Activated naive CD4-positive, alpha-beta T cell treated with anti-CD3 and anti-CD28 coated beads for 36 hours (primary cell): ENCODE measurements at regions of chr3 and their contacts with region 1.

Region 1: DNA sequence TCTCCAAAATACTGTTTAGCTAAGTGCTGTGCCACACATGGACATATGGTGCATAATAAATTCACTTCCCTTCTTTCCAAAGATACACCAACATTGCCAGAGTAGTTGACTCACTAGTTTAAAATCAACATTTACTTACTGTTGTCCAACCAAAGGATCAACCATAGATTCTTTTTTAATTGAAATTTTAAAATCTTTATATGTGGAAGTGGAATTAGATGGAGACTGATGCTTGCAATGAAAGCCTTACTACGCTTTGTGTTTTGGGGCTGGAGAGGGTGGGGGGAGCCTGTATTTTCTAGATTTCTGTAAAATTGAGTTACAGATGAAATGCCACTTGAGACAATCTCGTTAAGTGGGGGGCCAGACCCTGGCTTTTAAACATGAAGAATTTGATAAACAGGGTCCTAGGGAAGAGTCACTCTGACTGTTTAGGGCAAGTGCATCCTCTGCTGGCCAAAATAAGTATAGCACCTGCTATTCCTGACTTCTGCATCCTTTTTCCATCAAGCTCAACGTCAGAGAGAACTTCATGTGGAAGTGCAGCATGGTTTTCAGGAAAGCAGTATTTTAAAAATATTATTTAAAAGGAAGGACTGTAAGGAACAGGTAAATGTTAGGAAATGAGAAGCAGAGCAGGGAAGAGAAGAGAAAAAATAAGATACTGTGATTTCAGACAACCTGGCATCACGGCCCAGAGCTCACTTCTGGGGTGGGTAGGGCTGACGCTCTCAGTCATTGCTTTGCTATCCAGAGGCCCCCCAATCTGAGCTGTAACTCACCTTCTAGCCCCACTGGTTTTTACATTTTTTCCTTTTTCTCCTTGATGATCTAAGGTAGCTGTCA is 76.7 kb downstream of the BOC start:
- DNase-seq: peak; percentile 67
- H3K4me3 Mint-ChIP-seq: no peak overlapping the region
- H3K27ac Mint-ChIP-seq: no peak overlapping the region
- H3K4me1 Mint-ChIP-seq: peaks cover 6% of the 10 kb centered on the region
- H3K27me3 Mint-ChIP-seq: no peaks in the 10 kb centered on the region

Region 2: GRCh38 chr3:112979240-112979832 is 308.7 kb before region 1 on chr3:
- CTCF ChIA-PET with region 1: no interaction called
- intact Hi-C with region 1: loop called (anchors 5 kb)
- DNase-seq: no peak
- H3K4me3 Mint-ChIP-seq: no peak overlapping the region
- H3K27ac Mint-ChIP-seq: no peak overlapping the region
- H3K4me1 Mint-ChIP-seq: peaks cover 64% of the 10 kb centered on the region
- H3K27me3 Mint-ChIP-seq: no peaks in the 10 kb centered on the region

Region 3: DNA sequence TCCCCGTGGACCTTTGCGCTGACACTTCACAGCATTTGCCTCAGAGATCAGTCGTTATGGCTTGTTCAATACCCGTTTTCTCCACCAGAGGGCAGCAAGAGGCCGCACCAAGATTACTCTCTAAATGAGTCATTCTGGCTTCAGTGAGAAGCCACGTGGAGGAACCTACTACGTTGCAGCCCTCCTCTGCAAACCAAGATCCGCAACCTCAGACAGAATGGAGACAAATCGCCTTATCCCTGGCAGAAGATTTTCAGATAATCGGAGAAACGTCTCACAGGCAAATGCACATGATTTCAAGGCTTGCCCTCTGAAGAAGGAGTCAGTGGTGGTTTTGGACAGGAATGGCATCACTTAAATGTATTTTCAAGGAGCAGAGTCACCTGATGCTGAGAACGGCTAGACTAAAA is 236.7 kb before region 1 on chr3:
- CTCF ChIA-PET with region 1: interaction called, 38 read pairs
- intact Hi-C with region 1: loop called (anchors 1 kb)
- DNase-seq: peak; percentile 96
- H3K4me3 Mint-ChIP-seq: no peak overlapping the region
- H3K27ac Mint-ChIP-seq: no peak overlapping the region
- H3K4me1 Mint-ChIP-seq: peaks cover 12% of the 10 kb centered on the region
- H3K27me3 Mint-ChIP-seq: no peaks in the 10 kb centered on the region

Region 4: GRCh38 chr3:113136071-113136470 is 152.0 kb before region 1 on chr3:
- CTCF ChIA-PET with region 1: interaction called, 8 read pairs
- intact Hi-C with region 1: loop called (anchors 1 kb)
- DNase-seq: no peak
- H3K4me3 Mint-ChIP-seq: no peak overlapping the region
- H3K27ac Mint-ChIP-seq: no peak overlapping the region
- H3K4me1 Mint-ChIP-seq: peaks cover 3% of the 10 kb centered on the region
- H3K27me3 Mint-ChIP-seq: no peaks in the 10 kb centered on the region

Region 5: GRCh38 chr3:113223475-113224281 is 64.3 kb before region 1 on chr3:
- CTCF ChIA-PET with region 1: interaction called, 3 read pairs
- intact Hi-C with region 1: loop called (anchors 5 kb)
- DNase-seq: peak; percentile 36
- H3K4me3 Mint-ChIP-seq: peak overlapping the region; percentile 6
- H3K27ac Mint-ChIP-seq: no peak overlapping the region
- H3K4me1 Mint-ChIP-seq: peaks cover 11% of the 10 kb centered on the region
- H3K27me3 Mint-ChIP-seq: peaks cover 27% of the 10 kb centered on the region